ENCODE measurements at regions of chr1 and their contacts with region 1.

Region 1: GRCh38 chr1:24744911-24745710 is at the start of gene CLIC4:
- DNase-seq: peak; percentile 100
- ATAC-seq: peak; percentile 94 to 99 (median 97)
- H3K4me3 ChIP-seq: peak within 1 kb of the TSS; percentile 80 to 98 (median 94)
- H3K27ac ChIP-seq: peak within 1 kb of the TSS; percentile 94 to 99 (median 96)
- H3K4me1 ChIP-seq: peaks cover 0 to 63% (median 43%) of the 10 kb centered on the region in 9 donors
- H3K27me3 ChIP-seq: no peaks in the 10 kb centered on the region
- CTCF ChIP-seq: peak in 7 of 9 donors; percentile 11 to 72 (median 38)
- total RNA-seq, gene CLIC4: 256 to 511 (median 353) TPM

Region 2: DNA sequence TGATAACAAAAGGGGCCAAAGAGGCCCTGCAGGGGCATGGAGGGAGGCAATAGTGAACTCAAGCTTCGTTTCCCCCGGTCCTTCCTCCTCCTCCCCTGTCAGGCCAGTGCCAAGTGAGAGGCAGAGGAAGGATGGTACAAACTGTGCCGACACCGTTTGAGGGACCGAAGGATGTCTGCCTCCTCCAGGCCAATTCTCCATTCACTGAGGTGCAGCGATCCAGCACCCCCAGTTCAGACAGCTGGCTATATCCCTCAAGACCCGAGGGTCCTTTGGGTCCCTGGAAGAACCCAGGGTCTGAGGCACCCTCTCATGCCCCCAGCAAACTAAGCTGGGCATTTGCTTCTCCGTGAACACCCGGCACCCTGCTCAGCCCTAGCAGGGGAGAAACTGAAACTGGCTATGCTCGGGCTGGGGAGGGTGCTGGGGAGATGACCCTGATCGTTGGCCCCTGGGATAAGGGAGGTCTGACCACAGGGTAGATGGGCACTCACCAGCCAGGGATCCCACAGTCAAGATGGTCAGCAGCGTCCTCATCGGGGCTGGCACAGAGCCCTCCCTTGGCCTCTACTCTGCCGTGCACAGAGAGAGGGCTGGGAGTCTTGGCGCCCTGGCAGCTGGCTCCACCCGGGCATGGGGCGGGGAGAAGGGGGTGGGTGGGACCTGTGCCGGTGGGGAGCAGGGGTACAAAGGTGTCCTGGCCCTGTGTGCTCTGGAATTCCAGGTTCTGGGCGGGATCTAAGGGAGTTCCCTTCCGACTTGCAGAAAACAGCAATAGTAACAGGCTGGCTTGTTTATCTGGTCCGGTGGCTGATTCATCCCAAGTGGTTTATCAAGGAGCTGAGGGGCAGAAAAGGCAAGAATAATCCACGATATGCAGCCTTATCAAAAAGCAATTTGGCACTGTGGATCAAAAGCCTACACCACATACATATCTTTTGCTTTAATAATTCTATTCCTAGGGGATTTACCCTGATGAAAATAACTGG is 602.3 kb before region 1 on chr1 and contains the start of gene IL22RA1:
- intact Hi-C with region 1: no loop called
- DNase-seq: peak in 1 of 2 donors; percentile 45
- ATAC-seq: peak; percentile 59 to 82 (median 62)
- H3K4me3 ChIP-seq: peak within 1 kb of the TSS in 9 of 10 donors; percentile 28 to 51 (median 46)
- H3K27ac ChIP-seq: no peak within 1 kb of the TSS
- H3K4me1 ChIP-seq: peaks cover 0 to 12% (median 0%) of the 10 kb centered on the region in 9 donors
- H3K27me3 ChIP-seq: peaks cover 0 to 13% (median 0%) of the 10 kb centered on the region in 7 donors
- CTCF ChIP-seq: no peak
- total RNA-seq, gene IL22RA1: 0.13 to 1.6 (median 0.31) TPM in 9 of 10 donors, not detected in the other

Region 3: GRCh38 chr1:24694380-24694843 is 50.7 kb before region 1 on chr1:
- intact Hi-C with region 1: loop called in 8 of 10 experiments (anchors 1 to 5 kb)
- DNase-seq: peak; percentile 56 to 71
- ATAC-seq: peak; percentile 78 to 93 (median 90)
- H3K4me3 ChIP-seq: no peak overlapping the region
- H3K27ac ChIP-seq: peak overlapping the region; percentile 53 to 84 (median 74)
- H3K4me1 ChIP-seq: peaks cover 21 to 62% (median 44%) of the 10 kb centered on the region in 9 donors
- H3K27me3 ChIP-seq: no peaks in the 10 kb centered on the region
- CTCF ChIP-seq: no peak

Region 4: DNA sequence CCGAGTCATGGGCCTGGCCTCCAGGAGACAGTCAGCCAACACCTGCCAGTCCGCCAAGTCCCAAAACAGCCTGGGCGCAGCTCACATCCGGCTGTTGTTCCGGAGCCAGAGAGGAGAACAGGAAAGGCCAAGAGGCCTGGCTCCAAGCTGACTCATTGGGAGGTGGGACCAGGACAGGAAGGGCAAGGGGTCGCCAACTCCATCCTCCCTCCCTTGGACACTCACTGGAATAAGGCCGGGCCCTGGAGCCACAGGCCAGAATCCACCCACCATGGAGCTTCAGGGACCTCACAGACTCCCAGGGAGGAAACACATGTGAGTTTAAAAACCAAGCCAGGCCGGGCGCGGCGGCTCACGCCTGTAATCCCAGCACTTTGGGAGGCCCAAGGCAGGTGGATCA is 25.0 kb before region 1 on chr1:
- intact Hi-C with region 1: loop called in 1 of 10 experiments (anchors 2 kb)
- DNase-seq: peak; percentile 87 to 94
- ATAC-seq: peak; percentile 93 to 97 (median 96)
- H3K4me3 ChIP-seq: no peak overlapping the region
- H3K27ac ChIP-seq: peak overlapping the region; percentile 44 to 88 (median 81)
- H3K4me1 ChIP-seq: peaks cover 13 to 57% (median 48%) of the 10 kb centered on the region in 9 donors
- H3K27me3 ChIP-seq: no peaks in the 10 kb centered on the region
- CTCF ChIP-seq: no peak

Region 5: GRCh38 chr1:24822887-24823286 is 77.8 kb after region 1 on chr1:
- intact Hi-C with region 1: loop called in 7 of 10 experiments (anchors 2 to 10 kb)
- DNase-seq: no peak
- ATAC-seq: no peak
- H3K4me3 ChIP-seq: no peak overlapping the region
- H3K27ac ChIP-seq: peak overlapping the region in 3 of 10 donors; percentile 1 to 44 (median 25)
- H3K4me1 ChIP-seq: peaks cover 0 to 58% (median 52%) of the 10 kb centered on the region in 9 donors
- H3K27me3 ChIP-seq: no peaks in the 10 kb centered on the region
- CTCF ChIP-seq: no peak